Spleen (tissue), 13 donors: ENCODE measurements at regions of chrX and their contacts with region 1.

Region 1: GRCh38 chrX:37926700-37927099 is 79.3 kb upstream of the DYNLT3 start:
- DNase-seq: no peak
- H3K4me3 ChIP-seq: no peak overlapping the region
- H3K27ac ChIP-seq: no peak overlapping the region
- H3K4me1 ChIP-seq: no peaks in the 10 kb centered on the region
- H3K27me3 ChIP-seq: peaks cover 0 to 18% (median 0%) of the 10 kb centered on the region in 7 donors
- CTCF ChIP-seq: peak in 10 of 11 experiments; percentile 18 to 51 (median 41)
- POLR2A ChIP-seq: no peak

Region 2: GRCh38 chrX:37846934-37847732 is 79.6 kb before region 1 on chrX and contains the start of gene DYNLT3:
- intact Hi-C with region 1: no loop called
- DNase-seq: peak; percentile 95
- H3K4me3 ChIP-seq: peak within 1 kb of the TSS; percentile 41 to 78 (median 58)
- H3K27ac ChIP-seq: peak within 1 kb of the TSS; percentile 4 to 89 (median 82)
- H3K4me1 ChIP-seq: peaks cover 0 to 17% (median 0%) of the 10 kb centered on the region in 6 donors
- H3K27me3 ChIP-seq: peaks cover 0 to under 1% (median 0%) of the 10 kb centered on the region in 7 donors
- CTCF ChIP-seq: no peak
- POLR2A ChIP-seq: peak in 2 of 3 donors; percentile 17 to 48
- total RNA-seq, gene DYNLT3: 15.8 to 29.8 (median 19.3) TPM

Region 3: GRCh38 chrX:38166478-38167083 is 239.9 kb after region 1 on chrX:
- intact Hi-C with region 1: loop called (anchors 5 kb)
- DNase-seq: no peak
- H3K4me3 ChIP-seq: no peak overlapping the region
- H3K27ac ChIP-seq: no peak overlapping the region
- H3K4me1 ChIP-seq: no peaks in the 10 kb centered on the region
- H3K27me3 ChIP-seq: peaks cover 0 to 11% (median 0%) of the 10 kb centered on the region in 7 donors
- CTCF ChIP-seq: peak in 10 of 11 experiments; percentile 21 to 66 (median 46)
- POLR2A ChIP-seq: no peak